ENCODE measurements at regions of chr6 and their contacts with region 1.

Region 1: DNA sequence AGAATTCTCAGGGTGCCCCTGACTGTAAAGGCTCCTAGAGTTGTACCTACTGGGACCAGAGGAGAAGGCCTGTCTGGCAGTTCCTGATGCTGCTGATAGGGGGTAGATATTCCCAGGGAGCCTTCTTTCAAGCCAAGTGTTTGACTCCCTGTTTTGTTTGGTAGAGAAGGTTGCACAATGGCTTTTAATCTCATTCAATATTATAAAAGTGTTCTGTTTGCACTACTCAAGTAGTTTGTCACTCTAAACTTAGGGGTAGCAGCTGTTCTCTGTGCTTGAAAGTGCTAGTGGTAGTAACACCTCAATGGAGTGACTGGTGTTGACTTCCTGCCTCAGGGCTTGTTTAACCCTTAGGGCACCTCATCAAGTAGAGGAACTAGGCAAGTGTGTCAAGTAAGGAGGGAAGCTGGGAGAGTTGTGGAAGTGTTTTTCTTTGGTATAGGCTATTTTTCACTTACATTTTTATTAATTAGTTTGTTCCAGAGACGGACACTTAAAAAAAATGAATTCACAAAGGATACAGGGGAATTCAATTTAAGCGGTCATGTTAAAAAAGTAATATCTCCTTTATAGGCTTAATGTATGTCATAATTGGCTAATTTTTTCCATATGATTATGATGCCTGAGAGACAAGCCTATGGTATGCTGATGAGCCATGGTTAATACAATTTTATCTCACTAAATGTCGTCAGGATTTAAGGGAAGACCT is 38.1 kb downstream of the BICRAL start:
- DNase-seq: no peak
- H3K4me3 ChIP-seq: no peak overlapping the region
- H3K27ac ChIP-seq: peak overlapping the region; percentile 23 to 47
- H3K4me1 ChIP-seq: no peaks in the 10 kb centered on the region
- H3K27me3 ChIP-seq: no peaks in the 10 kb centered on the region
- CTCF ChIP-seq: no peak
- POLR2A ChIP-seq: no peak

Region 2: GRCh38 chr6:42745707-42746462 is 74.1 kb before region 1 on chr6 and contains the start of gene TBCC:
- intact Hi-C with region 1: loop called (anchors 10 kb)
- DNase-seq: peak; percentile 99
- H3K4me3 ChIP-seq: peak within 1 kb of the TSS; percentile 51 to 81
- H3K27ac ChIP-seq: peak within 1 kb of the TSS; percentile 96 to 97
- H3K4me1 ChIP-seq: peaks cover 8% of the 10 kb centered on the region
- H3K27me3 ChIP-seq: no peaks in the 10 kb centered on the region
- CTCF ChIP-seq: no peak
- POLR2A ChIP-seq: peak; percentile 97
- total RNA-seq, gene TBCC: 43.4 to 59.8 TPM

Region 3: DNA sequence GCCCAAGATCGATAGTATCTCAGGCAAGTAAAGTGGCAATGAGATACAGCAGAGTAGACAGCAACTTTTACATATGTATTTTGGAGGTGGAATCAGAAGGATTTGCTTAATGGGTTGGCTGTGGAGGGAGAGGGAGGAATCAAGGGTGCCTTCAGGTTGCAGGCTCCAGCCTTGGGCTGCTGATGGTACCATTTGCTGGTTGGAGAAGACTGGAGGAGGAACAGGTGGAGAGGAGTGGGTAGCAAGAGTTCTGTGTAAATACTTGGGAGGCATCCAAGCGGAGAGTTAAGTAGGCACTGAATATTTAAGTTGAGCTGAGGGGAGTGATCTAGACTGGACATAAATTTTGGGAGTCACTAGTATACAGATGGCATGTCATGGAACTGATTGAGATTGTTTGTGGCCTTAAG is 32.9 kb before region 1 on chr6:
- intact Hi-C with region 1: loop called (anchors 5 kb)
- DNase-seq: no peak
- H3K4me3 ChIP-seq: no peak overlapping the region
- H3K27ac ChIP-seq: no peak overlapping the region
- H3K4me1 ChIP-seq: no peaks in the 10 kb centered on the region
- H3K27me3 ChIP-seq: no peaks in the 10 kb centered on the region
- CTCF ChIP-seq: no peak
- POLR2A ChIP-seq: no peak